CD4-positive, alpha-beta T cell (primary cell): ENCODE measurements at regions of chr22 and their contacts with region 1.

Region 1: DNA sequence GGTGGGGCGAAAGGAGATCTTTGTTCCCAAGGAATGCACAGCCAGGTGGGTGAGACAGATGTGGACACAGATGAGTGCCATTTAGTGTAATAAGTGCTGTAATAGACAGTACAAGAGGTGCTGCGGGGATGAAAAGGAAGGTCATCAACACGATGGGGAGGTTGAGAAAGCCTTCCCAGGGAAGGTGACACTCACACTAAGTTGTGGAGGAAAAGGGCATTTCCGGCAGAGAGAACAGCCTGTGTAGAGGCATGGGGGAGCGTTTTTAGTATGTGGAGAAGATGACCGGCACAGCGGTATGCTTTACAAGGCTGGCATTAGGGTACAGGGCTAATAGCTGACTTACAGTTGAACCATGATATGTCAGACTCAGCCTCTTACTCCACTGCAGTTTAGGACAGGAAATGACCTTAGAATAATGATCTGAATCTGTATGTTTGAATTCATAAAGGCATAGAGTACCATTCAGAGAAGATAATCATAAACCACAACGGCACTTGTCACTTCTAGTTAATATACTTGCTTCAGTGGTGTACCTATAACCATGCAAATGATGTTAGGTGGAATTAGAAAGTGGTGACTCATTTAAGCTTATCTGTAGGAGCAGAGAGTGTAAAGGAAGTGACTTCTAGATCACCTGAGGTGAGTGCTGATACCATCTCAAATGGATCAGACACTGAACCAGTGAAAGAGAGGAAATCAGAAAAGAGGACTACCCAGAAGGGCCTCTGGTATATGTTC is 60.6 kb downstream of the FAM83F start:
- DNase-seq: peak in 4 of 14 experiments; percentile 23 to 80 (median 74)
- ATAC-seq: peak; percentile 95
- H3K4me3 ChIP-seq: peak overlapping the region; percentile 17
- H3K4me3 Mint-ChIP-seq: peak overlapping the region; percentile 57
- H3K27ac ChIP-seq: peak overlapping the region; percentile 72 to 86
- H3K27ac Mint-ChIP-seq: peak overlapping the region; percentile 82
- H3K4me1 ChIP-seq: peaks cover 71% of the 10 kb centered on the region
- H3K4me1 Mint-ChIP-seq: peaks cover 82% of the 10 kb centered on the region
- H3K27me3 ChIP-seq: no peaks in the 10 kb centered on the region
- H3K27me3 Mint-ChIP-seq: no peaks in the 10 kb centered on the region
- CTCF ChIP-seq: no peak

Region 2: GRCh38 chr22:39994566-39995392 is 60.5 kb before region 1 on chr22 and contains the start of gene FAM83F:
- CTCF ChIA-PET with region 1: no interaction called
- POLR2A ChIA-PET with region 1: no interaction called
- intact Hi-C with region 1: no loop called
- DNase-seq: peak in 10 of 14 experiments; percentile 6 to 68 (median 40)
- ATAC-seq: peak; percentile 18
- H3K4me3 ChIP-seq: peak within 1 kb of the TSS; percentile 29
- H3K4me3 Mint-ChIP-seq: peak within 1 kb of the TSS; percentile 81
- H3K27ac ChIP-seq: no peak within 1 kb of the TSS
- H3K27ac Mint-ChIP-seq: peak within 1 kb of the TSS; percentile 81
- H3K4me1 ChIP-seq: peaks cover 20% of the 10 kb centered on the region
- H3K4me1 Mint-ChIP-seq: peaks cover 18% of the 10 kb centered on the region
- H3K27me3 ChIP-seq: peaks cover 13 to 17% of the 10 kb centered on the region in 2 experiments
- H3K27me3 Mint-ChIP-seq: peaks cover 27% of the 10 kb centered on the region
- CTCF ChIP-seq: no peak
- total RNA-seq, gene FAM83F: 5.2 to 6.8 TPM

Region 3: GRCh38 chr22:40070701-40071100 is 15.4 kb after region 1 on chr22:
- CTCF ChIA-PET with region 1: interaction called, 4 read pairs
- POLR2A ChIA-PET with region 1: interaction called, 22 read pairs
- intact Hi-C with region 1: no loop called
- DNase-seq: no peak
- ATAC-seq: no peak
- H3K4me3 ChIP-seq: no peak overlapping the region
- H3K4me3 Mint-ChIP-seq: peak overlapping the region; percentile 0
- H3K27ac ChIP-seq: no peak overlapping the region
- H3K27ac Mint-ChIP-seq: no peak overlapping the region
- H3K4me1 ChIP-seq: peaks cover 36% of the 10 kb centered on the region
- H3K4me1 Mint-ChIP-seq: peaks cover 83% of the 10 kb centered on the region
- H3K27me3 ChIP-seq: no peaks in the 10 kb centered on the region
- H3K27me3 Mint-ChIP-seq: no peaks in the 10 kb centered on the region
- CTCF ChIP-seq: no peak

Region 4: GRCh38 chr22:40116496-40117200 is 61.3 kb after region 1 on chr22:
- CTCF ChIA-PET with region 1: interaction called, 3 read pairs
- POLR2A ChIA-PET with region 1: interaction called, 8 read pairs
- intact Hi-C with region 1: loop called (anchors 5 kb)
- DNase-seq: peak; percentile 17 to 87 (median 54)
- ATAC-seq: peak; percentile 94
- H3K4me3 ChIP-seq: no peak overlapping the region
- H3K4me3 Mint-ChIP-seq: peak overlapping the region; percentile 74
- H3K27ac ChIP-seq: peak overlapping the region; percentile 39 to 56
- H3K27ac Mint-ChIP-seq: peak overlapping the region; percentile 87
- H3K4me1 ChIP-seq: peaks cover 67% of the 10 kb centered on the region
- H3K4me1 Mint-ChIP-seq: peaks cover 95% of the 10 kb centered on the region
- H3K27me3 ChIP-seq: no peaks in the 10 kb centered on the region
- H3K27me3 Mint-ChIP-seq: no peaks in the 10 kb centered on the region
- CTCF ChIP-seq: no peak

Region 5: DNA sequence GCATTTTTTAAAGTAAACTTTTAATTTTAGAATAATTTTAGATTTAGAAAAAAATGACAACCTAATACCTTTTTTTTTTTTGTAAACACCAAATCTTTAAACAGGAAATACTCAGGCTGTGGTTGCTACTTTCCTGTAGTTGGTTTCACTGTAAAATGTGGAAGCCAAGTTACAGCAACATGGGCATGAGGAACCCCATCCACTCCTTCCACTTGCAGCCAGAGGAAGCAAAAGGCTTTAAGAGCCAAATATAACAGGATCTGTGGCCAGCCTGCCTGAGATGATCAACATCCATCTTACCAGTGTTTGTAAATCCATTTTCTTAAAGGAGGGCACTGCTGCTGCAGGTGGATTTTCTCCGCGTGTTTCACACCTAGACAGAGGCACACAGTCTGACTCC is 188.6 kb after region 1 on chr22:
- CTCF ChIA-PET with region 1: no interaction called
- POLR2A ChIA-PET with region 1: no interaction called
- intact Hi-C with region 1: loop called in 1 of 2 experiments (anchors 5 kb)
- DNase-seq: peak in 4 of 14 experiments; percentile 20 to 71 (median 57)
- ATAC-seq: no peak
- H3K4me3 ChIP-seq: peak overlapping the region; percentile 9
- H3K4me3 Mint-ChIP-seq: peak overlapping the region; percentile 80
- H3K27ac ChIP-seq: peak overlapping the region in 1 of 2 donors; percentile 18
- H3K27ac Mint-ChIP-seq: peak overlapping the region; percentile 86
- H3K4me1 ChIP-seq: peaks cover 82% of the 10 kb centered on the region
- H3K4me1 Mint-ChIP-seq: peaks cover 93% of the 10 kb centered on the region
- H3K27me3 ChIP-seq: no peaks in the 10 kb centered on the region
- H3K27me3 Mint-ChIP-seq: no peaks in the 10 kb centered on the region
- CTCF ChIP-seq: no peak